Left cardiac atrium (tissue), 4 donors: ENCODE measurements at regions of chr2 and their contacts with region 1.

Region 1: DNA sequence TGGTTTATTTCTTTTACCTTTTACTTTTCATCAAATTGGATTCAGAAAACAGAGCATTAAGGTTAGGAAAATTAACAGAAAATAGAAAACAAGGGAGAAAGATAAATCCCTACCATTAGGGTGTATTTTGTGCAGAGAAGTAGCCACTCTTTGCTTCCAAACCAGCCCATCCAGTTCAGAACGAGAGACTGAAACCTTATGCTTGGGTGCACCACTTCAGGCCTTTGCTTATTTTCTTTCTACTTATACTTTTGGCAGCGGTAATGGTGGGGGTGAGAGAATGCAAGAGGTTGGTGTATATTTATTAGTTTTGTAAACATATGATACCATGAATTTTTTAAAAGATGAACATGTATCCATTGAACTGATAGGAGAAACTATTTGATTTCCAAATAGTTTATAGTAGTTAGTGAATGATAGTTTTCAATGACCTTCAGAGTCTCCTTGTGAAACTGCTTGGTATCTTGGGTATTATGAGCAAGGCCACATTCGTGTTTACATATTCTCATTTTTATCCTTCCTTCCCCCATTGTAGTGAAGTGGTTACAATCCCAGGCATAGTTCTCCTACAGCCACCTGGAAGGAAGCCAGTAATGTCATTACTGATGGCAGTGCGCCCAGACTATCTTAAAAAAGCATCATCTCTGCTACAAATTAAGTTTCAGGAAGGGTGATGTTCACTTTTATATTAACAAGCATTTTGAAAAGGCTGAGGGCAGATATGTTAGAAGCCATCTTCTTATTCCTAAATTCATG is 60.8 kb downstream of the MFSD6 start:
- DNase-seq: peak; percentile 72
- ATAC-seq: peak; percentile 81 to 86

Region 2: GRCh38 chr2:190413421-190413820 is 55.6 kb before region 1 on chr2:
- intact Hi-C with region 1: loop called in 1 of 2 experiments (anchors 5 kb)
- DNase-seq: no peak
- ATAC-seq: peak in 1 of 2 donors; percentile 24